HCT116 (cell line): ENCODE measurements at regions of chr1 and their contacts with region 1.

Region 1: GRCh38 chr1:17485280-17485679 is 45.8 kb upstream of the RCC2 start:
- DNase-seq: no peak
- ATAC-seq: peak; percentile 54
- H3K4me3 ChIP-seq: no peak overlapping the region
- H3K27ac ChIP-seq: no peak overlapping the region
- H3K4me1 ChIP-seq: peaks cover 17 to 37% of the 10 kb centered on the region in 2 experiments
- H3K27me3 ChIP-seq: no peaks in the 10 kb centered on the region
- CTCF ChIP-seq: peak; percentile 50 to 59 (median 54)
- POLR2A ChIP-seq: no peak
- RAD21 ChIP-seq: peak; percentile 76

Region 2: DNA sequence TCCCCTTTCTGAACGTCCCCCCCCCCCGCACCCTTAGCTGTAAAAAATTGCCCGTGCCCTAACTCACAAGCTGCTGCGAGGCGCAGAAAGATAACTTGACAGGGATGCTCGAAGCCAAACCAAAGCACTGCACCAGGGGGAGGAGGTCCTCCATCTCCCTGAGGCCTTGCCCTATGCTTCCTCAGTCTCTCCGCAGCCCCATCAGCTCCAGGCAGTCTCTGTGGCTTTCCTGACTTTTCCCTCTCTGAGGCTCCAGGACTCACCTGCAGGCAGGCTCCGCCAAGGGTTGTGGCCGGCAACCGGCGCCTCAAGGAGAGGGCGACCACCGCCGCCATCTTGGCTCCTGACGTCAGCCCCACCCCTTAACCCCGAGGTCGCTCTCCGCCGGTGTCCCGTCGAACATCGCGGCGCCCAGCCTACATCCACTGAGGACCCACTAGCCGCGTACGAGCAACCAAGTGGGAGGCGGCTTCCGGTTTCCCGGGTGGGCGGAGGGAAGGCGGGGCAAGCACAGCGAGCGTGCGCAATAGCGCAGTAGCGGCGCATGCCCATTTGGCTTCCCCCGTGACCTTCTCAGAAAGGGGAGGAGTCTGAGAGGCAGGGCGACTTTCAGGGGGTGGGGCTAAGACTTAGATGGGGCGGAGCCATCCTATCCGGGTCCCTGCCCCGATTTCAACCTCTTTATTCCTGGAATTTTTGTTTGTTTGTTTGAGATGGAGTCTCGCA is 431.4 kb before region 1 on chr1 and contains the start of gene SDHB:
- CTCF ChIA-PET with region 1: no interaction called
- POLR2A ChIA-PET with region 1: no interaction called
- RAD21 ChIA-PET with region 1: no interaction called
- intact Hi-C with region 1: loop called (anchors 10 kb)
- DNase-seq: peak; percentile 97
- ATAC-seq: peak; percentile 98
- H3K4me3 ChIP-seq: peak within 1 kb of the TSS; percentile 96 to 100
- H3K27ac ChIP-seq: peak within 1 kb of the TSS; percentile 58
- H3K4me1 ChIP-seq: peaks cover 3 to 14% of the 10 kb centered on the region in 2 experiments; a peak in 3 of 4 replicates
- H3K27me3 ChIP-seq: no peaks in the 10 kb centered on the region
- CTCF ChIP-seq: no peak
- POLR2A ChIP-seq: peak; percentile 53
- RAD21 ChIP-seq: no peak
- total RNA-seq, gene SDHB: 159 TPM

Region 3: DNA sequence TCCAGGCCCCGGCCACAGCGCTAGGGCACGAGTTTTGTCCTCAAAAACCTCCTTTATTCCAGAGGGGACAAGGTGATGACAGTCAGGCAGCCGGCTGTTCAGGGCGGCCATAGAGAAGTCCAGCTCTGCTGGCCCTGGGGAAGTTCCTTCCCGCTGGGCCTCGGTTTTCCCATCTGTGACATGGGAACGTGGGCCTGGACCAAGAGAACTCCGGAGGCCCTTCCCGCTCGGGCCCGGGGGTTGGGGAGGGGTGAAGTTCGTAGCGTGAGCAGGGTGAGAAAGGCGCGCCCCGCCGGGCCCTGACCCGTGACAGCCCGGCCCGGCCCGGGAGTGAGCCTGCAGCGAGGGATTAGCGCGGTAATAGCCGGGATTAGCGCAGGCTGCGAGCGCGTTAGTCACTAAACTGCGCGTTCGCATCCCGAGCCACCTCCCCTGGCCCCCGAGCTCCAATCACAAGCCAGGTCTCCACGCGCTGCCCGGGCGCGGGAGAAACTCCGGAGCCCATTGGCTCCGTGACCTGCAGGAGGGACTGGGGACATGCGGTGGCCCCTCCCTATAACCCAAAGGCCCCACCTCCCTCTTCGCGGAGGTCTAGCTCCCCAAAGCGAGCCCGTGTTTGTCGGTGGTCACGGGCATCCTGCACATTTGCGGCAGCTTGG is 336.2 kb before region 1 on chr1:
- CTCF ChIA-PET with region 1: no interaction called
- POLR2A ChIA-PET with region 1: no interaction called
- RAD21 ChIA-PET with region 1: no interaction called
- intact Hi-C with region 1: no loop called
- DNase-seq: no peak
- ATAC-seq: no peak
- H3K4me3 ChIP-seq: no peak overlapping the region
- H3K27ac ChIP-seq: no peak overlapping the region
- H3K4me1 ChIP-seq: no peaks in the 10 kb centered on the region
- H3K27me3 ChIP-seq: peaks cover 4% of the 10 kb centered on the region; the same call in 1 of the 2 replicates
- CTCF ChIP-seq: no peak
- POLR2A ChIP-seq: no peak
- RAD21 ChIP-seq: no peak

Region 4: DNA sequence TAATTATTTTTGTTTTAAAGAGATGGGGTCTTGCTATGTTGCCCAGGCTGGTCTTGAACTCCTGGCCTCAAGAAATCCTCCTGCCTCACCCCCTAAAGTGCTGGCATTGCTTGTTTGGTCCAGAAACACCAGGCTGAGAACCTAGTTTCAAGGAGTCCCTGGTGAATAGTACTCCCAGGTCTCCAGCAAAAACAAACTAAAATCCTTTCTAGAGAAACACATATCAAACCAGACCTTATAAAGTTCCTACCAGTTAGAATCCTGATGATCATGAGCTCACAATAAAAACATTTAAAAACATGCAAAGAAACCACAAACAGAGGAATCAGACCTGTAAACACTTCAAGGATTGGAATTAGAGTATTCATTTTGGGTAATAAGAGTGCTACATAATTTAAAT is 314.7 kb before region 1 on chr1:
- CTCF ChIA-PET with region 1: no interaction called
- POLR2A ChIA-PET with region 1: no interaction called
- RAD21 ChIA-PET with region 1: no interaction called
- intact Hi-C with region 1: no loop called
- DNase-seq: no peak
- ATAC-seq: no peak
- H3K4me3 ChIP-seq: no peak overlapping the region
- H3K27ac ChIP-seq: no peak overlapping the region
- H3K4me1 ChIP-seq: peaks cover 20 to 24% of the 10 kb centered on the region in 2 experiments
- H3K27me3 ChIP-seq: no peaks in the 10 kb centered on the region
- CTCF ChIP-seq: no peak
- POLR2A ChIP-seq: no peak
- RAD21 ChIP-seq: no peak

Region 5: GRCh38 chr1:17419626-17420328 is 65.5 kb before region 1 on chr1:
- CTCF ChIA-PET with region 1: no interaction called
- POLR2A ChIA-PET with region 1: no interaction called
- RAD21 ChIA-PET with region 1: no interaction called
- intact Hi-C with region 1: loop called (anchors 1 kb)
- DNase-seq: no peak
- ATAC-seq: peak; percentile 90
- H3K4me3 ChIP-seq: no peak overlapping the region
- H3K27ac ChIP-seq: no peak overlapping the region
- H3K4me1 ChIP-seq: no peaks in the 10 kb centered on the region
- H3K27me3 ChIP-seq: no peaks in the 10 kb centered on the region
- CTCF ChIP-seq: peak; percentile 80 to 100 (median 100)
- POLR2A ChIP-seq: no peak
- RAD21 ChIP-seq: peak; percentile 90